PC-3 (cell line): ENCODE measurements at regions of chr3 and their contacts with region 1.

Region 1: GRCh38 chr3:23648326-23648995 is 157.3 kb upstream of the UBE2E1 start:
- DNase-seq: peak; percentile 32
- ATAC-seq: no peak
- H3K4me3 ChIP-seq: no peak overlapping the region
- H3K27ac ChIP-seq: no peak overlapping the region
- H3K4me1 ChIP-seq: peaks cover 42% of the 10 kb centered on the region
- H3K27me3 ChIP-seq: no peaks in the 10 kb centered on the region
- CTCF ChIP-seq: peak; percentile 44; the same call in 1 of the 2 replicates

Region 2: DNA sequence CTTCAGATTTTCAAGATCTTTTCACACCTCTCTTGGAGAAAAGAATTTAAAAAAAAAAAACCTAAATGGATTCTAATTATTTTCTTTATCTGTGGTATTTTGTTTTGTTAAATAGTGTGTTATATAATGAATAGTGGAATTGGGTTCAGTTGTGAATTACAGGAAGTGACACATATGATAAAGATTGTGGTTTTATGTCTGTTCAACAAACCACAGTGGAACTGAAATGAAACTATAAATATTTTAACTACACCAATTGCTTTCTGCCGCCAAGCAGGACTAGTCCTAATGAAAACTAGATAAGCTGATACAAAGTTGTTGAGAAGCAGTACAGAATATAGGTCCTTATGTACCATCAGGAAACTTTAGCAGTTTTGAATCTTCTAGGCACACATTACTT is 323.7 kb before region 1 on chr3:
- CTCF ChIA-PET with region 1: no interaction called
- POLR2A ChIA-PET with region 1: no interaction called
- intact Hi-C with region 1: loop called (anchors 1 kb)
- DNase-seq: peak; percentile 73
- ATAC-seq: peak; percentile 76
- H3K4me3 ChIP-seq: peak overlapping the region; percentile 31
- H3K27ac ChIP-seq: peak overlapping the region; percentile 29
- H3K4me1 ChIP-seq: peaks cover 43% of the 10 kb centered on the region
- H3K27me3 ChIP-seq: no peaks in the 10 kb centered on the region
- CTCF ChIP-seq: no peak

Region 3: GRCh38 chr3:23611737-23612295 is 36.6 kb before region 1 on chr3:
- CTCF ChIA-PET with region 1: no interaction called
- POLR2A ChIA-PET with region 1: interaction called, 4 read pairs
- intact Hi-C with region 1: loop called (anchors 5 kb)
- DNase-seq: no peak
- ATAC-seq: no peak; the same call in 1 of the 2 replicates
- H3K4me3 ChIP-seq: no peak overlapping the region
- H3K27ac ChIP-seq: peak overlapping the region; percentile 81
- H3K4me1 ChIP-seq: peaks cover 26% of the 10 kb centered on the region
- H3K27me3 ChIP-seq: no peaks in the 10 kb centered on the region
- CTCF ChIP-seq: no peak

Region 4: GRCh38 chr3:23785097-23785645 is 136.7 kb after region 1 on chr3:
- CTCF ChIA-PET with region 1: no interaction called
- POLR2A ChIA-PET with region 1: interaction called, 12 read pairs
- intact Hi-C with region 1: no loop called
- DNase-seq: no peak
- ATAC-seq: peak; percentile 53
- H3K4me3 ChIP-seq: no peak overlapping the region
- H3K27ac ChIP-seq: no peak overlapping the region
- H3K4me1 ChIP-seq: peaks cover 10% of the 10 kb centered on the region; the same call in 1 of the 2 replicates
- H3K27me3 ChIP-seq: no peaks in the 10 kb centered on the region
- CTCF ChIP-seq: no peak